ENCODE measurements at regions of chr1 and their contacts with region 1.

Region 1: DNA sequence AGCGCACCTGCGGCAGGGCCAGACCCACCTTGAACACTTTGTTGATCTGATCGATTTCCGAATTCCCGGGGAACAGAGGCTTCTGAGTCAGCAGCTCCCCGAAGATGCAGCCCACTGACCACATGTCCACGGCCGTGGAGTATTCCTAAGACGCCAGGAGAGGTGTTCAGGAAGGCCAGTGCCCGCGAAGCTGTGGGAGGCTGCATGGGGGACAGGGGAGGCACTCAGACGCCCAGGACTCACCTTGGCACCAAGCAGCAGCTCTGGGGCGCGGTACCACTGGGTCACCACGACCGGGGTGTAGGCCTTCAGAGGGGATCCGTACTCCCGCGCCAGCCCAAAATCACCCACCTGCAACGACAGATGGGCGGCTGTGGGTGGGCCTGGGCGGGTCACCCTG is 11.2 kb upstream of the SLC35E2B start:
- DNase-seq: peak; percentile 14 to 28
- ATAC-seq: no peak
- H3K4me3 ChIP-seq: no peak overlapping the region
- H3K27ac ChIP-seq: no peak overlapping the region
- H3K4me1 ChIP-seq: no peaks in the 10 kb centered on the region
- H3K27me3 ChIP-seq: no peaks in the 10 kb centered on the region
- CTCF ChIP-seq: no peak

Region 2: DNA sequence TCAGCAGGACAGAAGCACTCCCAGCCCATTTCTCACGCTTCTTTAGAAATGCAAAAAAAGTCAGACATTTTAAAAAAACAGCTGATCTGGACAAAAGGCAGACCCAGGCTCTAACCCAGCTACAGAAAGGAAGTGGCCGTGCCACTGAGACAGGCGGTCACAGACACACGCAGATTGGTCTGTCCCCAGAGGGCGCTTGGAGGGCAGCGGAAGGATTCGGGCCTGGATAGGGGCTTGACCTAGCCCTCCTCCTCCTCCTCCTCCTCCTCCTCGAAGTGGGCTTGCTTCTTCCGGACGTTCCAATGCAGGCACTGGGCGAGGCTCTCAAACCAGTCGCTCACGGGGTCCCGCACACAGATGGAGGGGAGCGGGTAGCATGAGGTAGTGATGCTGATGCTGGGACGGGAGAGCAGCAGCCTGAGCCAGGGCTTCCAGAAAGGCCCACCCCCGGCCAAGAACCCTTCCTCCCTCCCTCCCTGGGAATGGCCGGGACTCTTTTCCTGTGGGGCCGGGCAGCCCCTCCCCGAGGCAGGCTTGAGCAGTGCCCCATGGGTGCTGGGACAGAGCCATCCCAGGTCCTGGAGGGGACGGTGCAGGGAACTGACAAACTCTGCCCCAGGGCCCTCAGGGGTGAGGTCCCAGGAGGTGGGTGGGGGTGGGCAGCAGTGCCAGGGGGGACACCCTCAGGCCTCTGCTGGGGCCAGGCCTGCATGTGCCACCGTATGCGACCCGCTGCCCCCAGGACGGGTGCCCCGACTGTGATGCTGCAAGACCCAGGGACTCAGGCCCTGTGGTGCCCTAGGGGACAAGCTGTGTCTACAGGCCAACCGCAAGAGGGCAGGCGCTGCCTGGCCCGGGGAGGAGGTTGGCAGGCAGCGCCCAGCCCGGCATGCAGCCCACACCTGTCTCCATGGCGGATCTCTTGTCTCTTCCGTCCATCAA is 49.1 kb after region 1 on chr1:
- intact Hi-C with region 1: loop called in 1 of 2 experiments (anchors 10 kb)
- DNase-seq: peak; percentile 56 to 86
- ATAC-seq: peak; percentile 88 to 95 (median 92)
- H3K4me3 ChIP-seq: no peak overlapping the region
- H3K27ac ChIP-seq: no peak overlapping the region
- H3K4me1 ChIP-seq: peaks cover 5% of the 10 kb centered on the region
- H3K27me3 ChIP-seq: no peaks in the 10 kb centered on the region
- CTCF ChIP-seq: peak; percentile 72

Region 3: GRCh38 chr1:1847061-1847850 is 143.5 kb after region 1 on chr1:
- intact Hi-C with region 1: no loop called
- DNase-seq: no peak
- ATAC-seq: peak in 1 of 4 donors; percentile 57
- H3K4me3 ChIP-seq: no peak overlapping the region
- H3K27ac ChIP-seq: peak overlapping the region; percentile 31
- H3K4me1 ChIP-seq: peaks cover 34% of the 10 kb centered on the region
- H3K27me3 ChIP-seq: no peaks in the 10 kb centered on the region
- CTCF ChIP-seq: no peak

Measured in psoas muscle (tissue), 8 donors.